ENCODE measurements at regions of chr17 and their contacts with region 1.

Region 1: DNA sequence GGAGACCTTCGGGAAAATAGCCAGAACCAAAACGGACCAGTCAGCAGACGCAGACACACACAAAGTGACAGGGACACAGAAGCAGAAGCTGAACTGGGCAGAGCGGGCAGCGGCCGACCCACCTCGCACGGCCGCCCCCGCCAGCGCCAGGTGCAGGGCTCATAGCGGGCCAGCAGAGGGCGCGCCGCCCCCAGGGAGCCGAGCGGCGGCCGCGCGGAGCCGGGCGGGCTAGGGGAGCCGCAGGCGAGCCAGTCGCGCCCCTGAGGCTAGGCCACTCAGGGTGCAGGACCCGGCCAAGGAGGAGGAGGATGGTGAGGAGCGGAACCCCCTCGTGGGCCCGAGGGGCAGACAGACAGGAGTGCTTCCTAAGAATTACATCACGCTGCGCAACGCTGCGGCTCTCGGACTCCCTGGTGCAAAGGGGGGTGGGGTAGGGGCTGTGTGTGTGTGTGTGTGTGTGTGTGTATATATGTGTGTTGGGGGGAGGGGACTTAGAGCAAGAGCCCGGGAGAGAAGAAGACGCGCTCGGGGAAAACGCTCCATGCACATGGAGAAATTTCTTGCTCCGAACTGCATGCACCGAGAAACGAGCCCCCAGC is 913 bp upstream of the NOG start:
- DNase-seq: peak; percentile 19 to 64 (median 47)
- H3K4me3 ChIP-seq: peak overlapping the region in 2 of 4 donors; percentile 25 to 40
- H3K27ac ChIP-seq: no peak overlapping the region
- H3K4me1 ChIP-seq: peaks cover 14 to 44% of the 10 kb centered on the region in 2 donors
- H3K27me3 ChIP-seq: peaks cover 33% of the 10 kb centered on the region
- CTCF ChIP-seq: peak; percentile 34 to 99 (median 70)
- POLR2A ChIP-seq: no peak

Region 2: GRCh38 chr17:56715613-56716357 is 123.2 kb after region 1 on chr17:
- intact Hi-C with region 1: loop called (anchors 5 kb)
- DNase-seq: peak; percentile 70 to 92 (median 83)
- H3K4me3 ChIP-seq: no peak overlapping the region
- H3K27ac ChIP-seq: no peak overlapping the region
- H3K4me1 ChIP-seq: no peaks in the 10 kb centered on the region
- H3K27me3 ChIP-seq: no peaks in the 10 kb centered on the region
- CTCF ChIP-seq: peak; percentile 66 to 81 (median 78)
- POLR2A ChIP-seq: no peak

Region 3: GRCh38 chr17:56779898-56780733 is 187.5 kb after region 1 on chr17:
- intact Hi-C with region 1: loop called (anchors 5 to 10 kb)
- DNase-seq: peak; percentile 56 to 79 (median 71)
- H3K4me3 ChIP-seq: peak overlapping the region in 1 of 4 donors; percentile 11
- H3K27ac ChIP-seq: no peak overlapping the region
- H3K4me1 ChIP-seq: peaks cover 3 to 5% of the 10 kb centered on the region in 2 donors
- H3K27me3 ChIP-seq: peaks cover 20% of the 10 kb centered on the region
- CTCF ChIP-seq: peak; percentile 56 to 99 (median 86)
- POLR2A ChIP-seq: no peak